Endothelial cell of umbilical vein (primary cell): ENCODE measurements at regions of chr1 and their contacts with region 1.

Region 1: GRCh38 chr1:101288491-101288944 is 51.7 kb downstream of the S1PR1 start:
- DNase-seq: peak; percentile 97
- H3K4me3 ChIP-seq: no peak overlapping the region
- H3K27ac ChIP-seq: peak overlapping the region; percentile 76
- H3K4me1 ChIP-seq: peaks cover 41% of the 10 kb centered on the region
- H3K27me3 ChIP-seq: no peaks in the 10 kb centered on the region
- CTCF ChIP-seq: peak; percentile 76 to 85
- POLR2A ChIP-seq: no peak

Region 2: GRCh38 chr1:100921109-100921706 is 367.3 kb before region 1 on chr1:
- CTCF ChIA-PET with region 1: interaction called, 53 read pairs
- POLR2A ChIA-PET with region 1: no interaction called
- dilution Hi-C with region 1: no loop called
- intact Hi-C with region 1: loop called (anchors 1 kb)
- DNase-seq: peak; percentile 81
- H3K4me3 ChIP-seq: no peak overlapping the region
- H3K27ac ChIP-seq: no peak overlapping the region
- H3K4me1 ChIP-seq: peaks cover 11% of the 10 kb centered on the region
- H3K27me3 ChIP-seq: no peaks in the 10 kb centered on the region
- CTCF ChIP-seq: peak; percentile 24
- POLR2A ChIP-seq: no peak

Region 3: DNA sequence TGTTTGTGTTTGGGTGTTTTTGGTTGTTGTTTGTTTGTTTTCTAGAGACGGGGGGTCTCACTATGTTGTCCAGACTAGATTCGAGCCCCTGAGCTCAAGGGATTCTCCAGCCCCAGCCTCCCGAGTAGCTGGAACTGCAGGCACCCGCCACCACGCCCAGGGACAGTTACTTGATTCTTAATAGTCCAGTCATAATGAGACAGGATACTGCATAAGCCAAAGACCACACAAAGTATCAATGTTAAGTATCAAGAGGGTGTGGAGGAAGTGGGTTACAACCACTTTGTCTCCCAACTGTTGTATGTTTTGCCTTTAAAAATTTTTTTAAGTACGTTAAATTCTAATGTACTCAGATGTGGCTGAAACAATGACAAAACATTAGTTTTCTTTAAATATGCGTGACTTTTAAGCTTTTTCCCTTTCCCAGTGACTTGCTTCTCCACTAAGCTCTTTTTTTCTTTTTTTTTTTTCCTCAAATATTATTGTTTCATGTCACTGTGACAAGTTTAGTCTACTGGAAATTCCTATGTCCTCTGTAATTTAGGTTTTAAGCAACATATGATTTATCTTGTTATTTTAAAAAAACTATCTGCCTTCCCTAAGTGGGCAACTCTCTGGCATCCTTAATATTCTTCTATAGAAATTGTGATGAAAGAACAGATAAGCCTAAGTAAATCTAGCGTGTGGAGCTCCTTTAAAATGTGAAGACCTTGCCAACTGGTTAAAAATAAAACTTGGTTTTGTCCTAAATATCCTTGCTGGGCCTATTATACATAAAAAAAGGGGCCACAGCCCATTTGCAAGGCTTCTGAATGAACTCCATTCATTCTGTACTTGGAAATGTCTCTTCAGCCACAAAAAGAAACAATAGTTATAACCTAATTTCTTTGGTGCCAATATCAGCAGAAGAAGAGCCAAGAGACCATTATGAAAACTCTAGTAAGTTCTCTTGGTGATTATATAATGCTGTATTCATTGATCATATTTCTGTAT is 206.7 kb before region 1 on chr1:
- CTCF ChIA-PET with region 1: no interaction called
- POLR2A ChIA-PET with region 1: no interaction called
- dilution Hi-C with region 1: no loop called
- intact Hi-C with region 1: no loop called
- DNase-seq: no peak
- H3K4me3 ChIP-seq: no peak overlapping the region
- H3K27ac ChIP-seq: no peak overlapping the region
- H3K4me1 ChIP-seq: no peaks in the 10 kb centered on the region
- H3K27me3 ChIP-seq: no peaks in the 10 kb centered on the region
- CTCF ChIP-seq: no peak
- POLR2A ChIP-seq: no peak

Region 4: GRCh38 chr1:101136739-101137138 is 151.8 kb before region 1 on chr1:
- CTCF ChIA-PET with region 1: interaction called, 129 read pairs
- POLR2A ChIA-PET with region 1: interaction called, 8 read pairs
- dilution Hi-C with region 1: no loop called
- intact Hi-C with region 1: loop called (anchors 1 kb)
- DNase-seq: peak; percentile 91
- H3K4me3 ChIP-seq: no peak overlapping the region
- H3K27ac ChIP-seq: no peak overlapping the region
- H3K4me1 ChIP-seq: peaks cover 28% of the 10 kb centered on the region
- H3K27me3 ChIP-seq: no peaks in the 10 kb centered on the region
- CTCF ChIP-seq: peak; percentile 33 to 43
- POLR2A ChIP-seq: no peak

Region 5: GRCh38 chr1:101253976-101254674 is 34.4 kb before region 1 on chr1:
- CTCF ChIA-PET with region 1: interaction called, 27 read pairs
- POLR2A ChIA-PET with region 1: interaction called, 6 read pairs
- dilution Hi-C with region 1: no loop called
- intact Hi-C with region 1: no loop called
- DNase-seq: no peak
- H3K4me3 ChIP-seq: no peak overlapping the region
- H3K27ac ChIP-seq: no peak overlapping the region
- H3K4me1 ChIP-seq: peaks cover 22% of the 10 kb centered on the region
- H3K27me3 ChIP-seq: no peaks in the 10 kb centered on the region
- CTCF ChIP-seq: no peak
- POLR2A ChIP-seq: no peak

Region 6: GRCh38 chr1:101302831-101303511 is 14.5 kb after region 1 on chr1:
- CTCF ChIA-PET with region 1: interaction called, 75 read pairs
- POLR2A ChIA-PET with region 1: interaction called, 7 read pairs
- dilution Hi-C with region 1: no loop called
- intact Hi-C with region 1: loop called (anchors 1 kb)
- DNase-seq: peak; percentile 82
- H3K4me3 ChIP-seq: no peak overlapping the region
- H3K27ac ChIP-seq: peak overlapping the region; percentile 51
- H3K4me1 ChIP-seq: peaks cover 59% of the 10 kb centered on the region
- H3K27me3 ChIP-seq: no peaks in the 10 kb centered on the region
- CTCF ChIP-seq: no peak
- POLR2A ChIP-seq: peak; percentile 17

Region 7: DNA sequence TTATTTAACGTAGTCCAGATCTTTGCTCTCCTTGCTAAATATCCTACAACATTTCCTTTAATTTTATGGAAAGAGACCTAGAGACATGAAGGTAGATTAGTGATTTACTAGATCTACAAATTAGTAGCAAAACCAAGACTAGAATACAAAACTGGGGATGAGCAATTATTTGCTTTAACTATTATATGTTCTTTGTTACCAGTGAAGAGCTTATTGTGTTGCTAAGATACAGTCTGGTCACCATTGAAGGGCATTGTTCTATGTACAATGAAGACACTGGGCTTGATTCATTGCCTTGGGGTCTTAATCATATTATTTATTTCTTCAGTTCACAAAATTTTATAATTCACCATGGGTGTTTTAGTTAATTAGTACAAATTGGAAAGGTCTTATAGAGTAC is 36.6 kb after region 1 on chr1:
- CTCF ChIA-PET with region 1: no interaction called
- POLR2A ChIA-PET with region 1: no interaction called
- dilution Hi-C with region 1: no loop called
- intact Hi-C with region 1: no loop called
- DNase-seq: no peak
- H3K4me3 ChIP-seq: no peak overlapping the region
- H3K27ac ChIP-seq: no peak overlapping the region
- H3K4me1 ChIP-seq: no peaks in the 10 kb centered on the region
- H3K27me3 ChIP-seq: peaks cover 8% of the 10 kb centered on the region in 2 experiments
- CTCF ChIP-seq: no peak
- POLR2A ChIP-seq: no peak

Region 8: GRCh38 chr1:101438359-101438758 is 149.8 kb after region 1 on chr1:
- CTCF ChIA-PET with region 1: interaction called, 16 read pairs
- POLR2A ChIA-PET with region 1: no interaction called
- dilution Hi-C with region 1: no loop called
- intact Hi-C with region 1: loop called (anchors 1 kb)
- DNase-seq: peak; percentile 59
- H3K4me3 ChIP-seq: no peak overlapping the region
- H3K27ac ChIP-seq: no peak overlapping the region
- H3K4me1 ChIP-seq: no peaks in the 10 kb centered on the region
- H3K27me3 ChIP-seq: peaks cover 6 to 8% of the 10 kb centered on the region in 2 experiments
- CTCF ChIP-seq: peak; percentile 44 to 55
- POLR2A ChIP-seq: no peak